Activated T-helper 1 cell treated with anti-CD3 and anti-CD28 coated beads, Interleukin-12 subunit alpha, Interleukin-12 subunit beta, Interleukin-2, Interleukin-4 antibody, amounts not matched to agents 30 ng/mL and 10 ng/mL and 1 ng/mL, durations not matched to agents 14 hours and 24 hours and 36 hours (primary cell): ENCODE measurements at regions of chr1 and their contacts with region 1.

Region 1: DNA sequence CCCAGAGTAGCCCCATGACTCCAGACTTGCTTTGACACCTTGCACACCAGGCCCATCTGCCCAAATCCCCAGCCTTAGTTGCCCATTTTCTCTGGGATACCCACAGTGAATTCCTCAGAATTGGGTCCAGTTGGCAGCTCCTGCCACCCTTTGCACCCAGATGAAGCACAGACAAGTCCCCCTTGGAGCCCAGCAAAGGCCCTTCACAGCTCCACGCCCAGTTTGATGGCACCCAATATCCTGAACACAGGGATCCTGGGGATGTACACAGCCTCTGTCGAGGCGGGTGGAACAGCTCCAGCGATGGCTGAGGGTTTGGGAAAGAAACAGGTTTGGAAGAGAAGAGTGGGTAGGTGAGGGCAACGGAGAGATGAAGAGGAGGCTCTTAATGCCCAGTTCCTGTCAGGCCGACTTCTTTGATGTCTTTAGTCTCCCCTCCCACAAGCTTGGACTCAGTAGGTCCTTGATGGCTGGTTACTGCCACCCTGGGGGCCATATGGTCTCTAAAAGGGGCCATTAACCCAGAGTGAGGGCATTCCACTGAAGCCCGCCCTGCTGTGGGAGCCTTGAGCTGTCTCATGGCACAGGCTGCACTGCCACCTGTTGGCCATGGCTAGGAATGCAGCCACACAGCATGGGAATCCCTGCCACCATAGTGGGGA is 21.7 kb downstream of the TMEM53 start:
- DNase-seq: peak; percentile 59
- H3K4me3 Mint-ChIP-seq: no peak overlapping the region
- H3K27ac Mint-ChIP-seq: no peak overlapping the region
- H3K4me1 Mint-ChIP-seq: no peaks in the 10 kb centered on the region
- H3K27me3 Mint-ChIP-seq: no peaks in the 10 kb centered on the region

Region 2: DNA sequence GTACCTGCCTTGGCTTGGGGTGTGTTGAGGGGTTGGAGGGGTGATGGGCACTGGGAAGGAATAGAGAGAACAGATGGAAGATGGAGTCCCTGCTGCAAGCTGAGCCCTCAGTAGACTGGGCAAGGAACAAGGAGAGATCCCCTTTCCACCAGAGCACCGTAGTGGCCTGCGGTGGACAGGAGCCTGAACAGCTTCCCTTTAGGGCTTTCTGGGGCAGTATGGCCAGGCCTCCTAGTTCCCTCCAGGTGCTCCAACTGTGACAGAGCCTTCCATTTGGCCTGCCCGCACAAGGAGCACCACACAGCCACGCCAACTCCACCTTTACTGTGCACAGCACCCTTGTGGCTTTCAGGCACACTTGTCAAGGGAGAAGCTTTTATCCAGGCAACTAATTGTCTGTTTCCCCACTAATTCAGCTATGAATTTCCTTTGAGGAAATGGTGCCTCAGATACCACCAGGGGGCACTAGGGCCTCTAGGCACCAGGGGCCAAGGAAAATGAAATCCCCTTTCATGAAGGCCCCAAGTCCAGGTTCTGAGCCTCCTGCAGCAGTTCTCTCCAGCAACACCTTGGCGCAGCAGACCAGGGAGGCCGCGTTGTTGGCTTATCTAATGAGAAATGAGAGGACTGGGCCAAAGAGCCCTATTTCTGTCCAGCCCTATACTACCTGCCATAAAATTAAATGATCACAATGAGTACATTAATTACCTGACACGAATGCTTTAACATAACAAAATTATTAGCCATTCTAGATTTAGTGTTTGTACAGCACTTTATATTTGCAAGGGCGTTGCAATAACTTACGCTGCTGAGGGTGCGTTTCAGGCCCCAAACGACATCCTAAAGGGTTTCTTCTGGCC is 274.4 kb before region 1 on chr1:
- intact Hi-C with region 1: loop called (anchors 2 kb)
- DNase-seq: no peak
- H3K4me3 Mint-ChIP-seq: no peak overlapping the region
- H3K27ac Mint-ChIP-seq: no peak overlapping the region
- H3K4me1 Mint-ChIP-seq: no peaks in the 10 kb centered on the region
- H3K27me3 Mint-ChIP-seq: peaks cover 5% of the 10 kb centered on the region

Region 3: DNA sequence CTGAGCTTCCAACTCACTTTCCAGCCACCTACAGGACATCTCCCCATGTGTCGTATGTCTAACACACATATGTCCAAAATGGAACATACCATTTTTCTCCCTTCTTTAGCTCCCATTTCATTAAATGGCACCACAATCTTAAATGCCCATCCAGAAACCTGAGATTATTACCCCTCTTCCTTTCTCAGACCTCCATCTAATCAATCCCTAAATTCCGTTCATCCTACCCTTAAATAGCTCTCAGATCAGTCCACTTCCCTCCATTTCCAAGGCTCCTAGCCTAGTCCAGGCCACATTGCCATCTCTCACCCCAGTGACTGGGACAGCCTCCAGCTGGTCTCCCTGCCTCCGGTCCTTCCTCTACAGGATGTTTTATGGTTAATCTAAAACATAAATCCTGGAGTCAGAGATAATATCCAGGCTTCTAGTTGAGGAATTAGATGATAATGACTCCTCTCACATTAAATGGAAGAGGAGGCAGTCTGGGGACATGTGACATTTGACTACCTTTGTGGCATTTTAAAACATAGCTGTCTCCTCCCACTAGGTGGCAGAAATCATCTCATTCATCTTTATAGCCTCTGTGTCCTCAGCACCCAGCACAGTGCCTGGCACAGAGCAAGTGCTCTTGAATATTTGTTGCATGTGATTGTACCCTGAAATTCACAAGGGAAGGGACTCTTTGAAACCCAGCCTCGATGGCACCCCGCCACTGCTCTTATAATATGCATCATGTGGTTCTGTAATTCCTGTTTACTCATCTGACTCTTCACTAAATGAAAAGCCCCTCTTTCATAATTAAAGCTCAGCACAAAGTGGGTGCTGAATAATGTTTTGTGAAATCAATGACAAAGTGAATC is 80.6 kb before region 1 on chr1:
- intact Hi-C with region 1: loop called (anchors 1 kb)
- DNase-seq: no peak
- H3K4me3 Mint-ChIP-seq: no peak overlapping the region
- H3K27ac Mint-ChIP-seq: no peak overlapping the region
- H3K4me1 Mint-ChIP-seq: no peaks in the 10 kb centered on the region
- H3K27me3 Mint-ChIP-seq: peaks cover 10% of the 10 kb centered on the region

Region 4: GRCh38 chr1:44609412-44609767 is 43.2 kb before region 1 on chr1:
- intact Hi-C with region 1: loop called (anchors 2 kb)
- DNase-seq: no peak
- H3K4me3 Mint-ChIP-seq: no peak overlapping the region
- H3K27ac Mint-ChIP-seq: no peak overlapping the region
- H3K4me1 Mint-ChIP-seq: no peaks in the 10 kb centered on the region
- H3K27me3 Mint-ChIP-seq: peaks cover 1% of the 10 kb centered on the region